PC-9 (cell line): ENCODE measurements at regions of chr14 and their contacts with region 1.

Region 1: DNA sequence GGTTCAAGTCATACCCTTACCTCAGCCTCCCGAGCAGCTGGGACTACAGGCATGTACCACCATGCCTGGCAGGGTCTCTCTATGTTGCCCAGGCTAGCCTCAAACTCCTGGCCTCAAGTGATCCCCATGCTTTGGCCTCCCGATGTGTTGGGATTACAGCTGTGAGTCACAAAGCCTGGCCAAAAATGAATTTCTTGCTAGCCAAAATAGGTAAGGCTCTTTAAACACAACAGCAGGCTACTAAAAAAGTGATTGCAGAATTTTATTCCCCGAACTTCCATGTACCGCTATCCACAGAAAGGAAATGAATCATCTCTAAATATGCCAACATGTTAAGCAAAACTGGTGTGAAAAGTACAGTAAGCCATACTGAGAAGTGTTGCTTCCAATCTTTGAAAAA is 50.6 kb downstream of the WDHD1 start:
- DNase-seq: no peak
- H3K4me3 ChIP-seq: no peak overlapping the region
- H3K27ac ChIP-seq: no peak overlapping the region
- H3K4me1 ChIP-seq: no peaks in the 10 kb centered on the region
- H3K27me3 ChIP-seq: no peaks in the 10 kb centered on the region
- CTCF ChIP-seq: no peak

Region 2: DNA sequence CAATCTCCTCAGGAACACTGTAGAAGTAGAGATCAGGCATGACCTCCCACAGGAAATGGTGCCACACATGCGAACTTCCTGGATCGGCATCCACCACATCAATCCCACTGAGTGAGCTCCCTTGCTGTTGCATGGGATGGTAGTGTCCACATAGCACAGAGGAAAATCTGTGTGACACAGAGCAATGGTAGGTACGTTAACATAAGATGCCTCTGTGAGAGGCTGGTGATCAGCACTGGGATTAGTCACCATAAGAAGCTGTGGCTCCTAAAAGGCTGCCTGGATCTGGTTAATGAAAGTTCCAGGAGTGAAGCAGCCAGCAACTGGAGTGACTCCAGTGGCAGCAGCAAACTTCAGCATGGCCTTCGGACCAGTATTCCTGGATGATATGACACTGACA is 28.8 kb after region 1 on chr14:
- CTCF ChIA-PET with region 1: no interaction called
- POLR2A ChIA-PET with region 1: no interaction called
- intact Hi-C with region 1: loop called (anchors 2 kb)
- DNase-seq: no peak
- H3K4me3 ChIP-seq: no peak overlapping the region
- H3K27ac ChIP-seq: no peak overlapping the region
- H3K4me1 ChIP-seq: no peaks in the 10 kb centered on the region
- H3K27me3 ChIP-seq: no peaks in the 10 kb centered on the region
- CTCF ChIP-seq: no peak